Tibial artery (tissue), 4 donors: ENCODE measurements at regions of chr11 and their contacts with region 1.

Region 1: GRCh38 chr11:75597636-75598035 is 35.6 kb downstream of the SERPINH1 start:
- DNase-seq: no peak
- H3K4me3 ChIP-seq: no peak overlapping the region
- H3K27ac ChIP-seq: no peak overlapping the region
- H3K4me1 ChIP-seq: no peaks in the 10 kb centered on the region
- H3K27me3 ChIP-seq: no peaks in the 10 kb centered on the region
- CTCF ChIP-seq: no peak

Region 2: DNA sequence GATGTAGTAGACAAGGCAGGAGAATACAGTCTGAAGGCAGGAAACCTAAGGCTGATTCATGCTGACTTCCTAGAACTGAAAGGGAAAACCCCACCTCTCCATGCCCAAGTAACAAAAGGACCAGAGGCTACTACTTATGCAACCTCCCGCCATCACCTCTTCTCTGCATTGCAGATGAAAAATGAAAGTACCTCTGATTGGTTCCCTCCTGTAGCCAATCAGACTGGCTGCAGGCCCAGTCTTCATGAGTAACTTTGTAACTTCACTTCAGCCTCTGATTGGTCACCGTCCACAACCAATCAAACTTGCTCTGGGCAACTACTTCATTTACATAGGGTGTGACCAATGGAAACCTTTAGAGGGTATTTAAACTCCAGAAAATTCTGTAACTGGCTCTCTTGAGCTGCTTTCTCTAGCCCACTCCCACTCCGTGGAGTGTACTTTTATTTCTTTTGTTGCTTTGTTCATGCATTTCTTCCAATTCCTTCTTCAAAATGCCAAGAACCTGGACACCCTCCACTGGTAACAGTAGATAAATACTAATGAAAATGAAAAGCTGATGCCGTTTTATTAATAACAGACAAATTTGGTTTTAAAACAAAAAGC is 76.4 kb after region 1 on chr11:
- intact Hi-C with region 1: loop called (anchors 10 kb)
- DNase-seq: no peak
- H3K4me3 ChIP-seq: no peak overlapping the region
- H3K27ac ChIP-seq: no peak overlapping the region
- H3K4me1 ChIP-seq: peaks cover 0 to 2% (median under 1%) of the 10 kb centered on the region in 4 donors
- H3K27me3 ChIP-seq: peaks cover 0 to 9% of the 10 kb centered on the region in 2 donors
- CTCF ChIP-seq: no peak